Activated B cell treated with CpG ODN at 0.5 μM for 24 hours (primary cell): ENCODE measurements at regions of chr4 and their contacts with region 1.

Region 1: DNA sequence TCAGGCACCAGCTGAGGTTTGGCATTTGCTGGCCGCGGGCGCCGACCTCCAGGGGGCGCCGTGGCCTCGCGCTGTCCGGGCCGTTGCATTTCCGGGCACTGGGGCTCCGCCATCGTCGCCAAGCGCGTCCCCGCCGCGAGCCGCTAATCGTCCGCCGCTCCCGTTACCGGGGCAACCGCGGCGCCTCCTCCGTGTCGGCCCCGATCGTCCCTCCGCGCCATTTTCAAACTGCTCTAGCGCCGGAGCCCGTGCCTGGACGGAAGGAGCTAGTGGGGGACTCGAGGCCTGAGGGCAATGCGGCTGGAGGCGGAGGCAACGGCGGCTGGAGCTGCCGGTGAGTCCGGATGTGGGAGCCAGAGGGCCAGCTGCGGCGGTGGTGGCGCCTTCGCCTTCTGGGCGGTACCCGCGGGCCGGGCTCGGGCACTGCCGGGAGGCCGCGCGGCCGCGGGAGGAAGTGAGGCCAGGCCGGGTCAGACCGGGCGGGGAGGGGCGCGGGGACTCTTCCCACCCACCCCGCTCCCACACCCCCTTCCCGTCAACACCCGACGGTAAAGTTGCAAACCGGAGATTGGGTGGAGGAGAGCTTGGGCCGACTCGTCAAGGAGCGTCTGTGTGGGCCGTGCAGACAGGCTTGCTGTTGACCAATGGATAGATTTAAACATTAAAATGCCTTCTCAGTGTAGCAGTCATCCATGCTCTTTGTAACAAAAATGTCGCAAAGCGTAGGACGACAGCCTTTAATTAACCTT is at the start of gene CEP135:
- DNase-seq: peak; percentile 94
- ATAC-seq: peak; percentile 79
- H3K4me3 Mint-ChIP-seq: peak within 1 kb of the TSS; percentile 94
- H3K27ac Mint-ChIP-seq: peak within 1 kb of the TSS; percentile 99
- H3K4me1 Mint-ChIP-seq: peaks cover 58% of the 10 kb centered on the region
- H3K27me3 Mint-ChIP-seq: no peaks in the 10 kb centered on the region
- CTCF ChIP-seq: peak; percentile 63
- total RNA-seq, gene CEP135: 24.7 and 30.2 TPM in 2 replicates

Region 2: DNA sequence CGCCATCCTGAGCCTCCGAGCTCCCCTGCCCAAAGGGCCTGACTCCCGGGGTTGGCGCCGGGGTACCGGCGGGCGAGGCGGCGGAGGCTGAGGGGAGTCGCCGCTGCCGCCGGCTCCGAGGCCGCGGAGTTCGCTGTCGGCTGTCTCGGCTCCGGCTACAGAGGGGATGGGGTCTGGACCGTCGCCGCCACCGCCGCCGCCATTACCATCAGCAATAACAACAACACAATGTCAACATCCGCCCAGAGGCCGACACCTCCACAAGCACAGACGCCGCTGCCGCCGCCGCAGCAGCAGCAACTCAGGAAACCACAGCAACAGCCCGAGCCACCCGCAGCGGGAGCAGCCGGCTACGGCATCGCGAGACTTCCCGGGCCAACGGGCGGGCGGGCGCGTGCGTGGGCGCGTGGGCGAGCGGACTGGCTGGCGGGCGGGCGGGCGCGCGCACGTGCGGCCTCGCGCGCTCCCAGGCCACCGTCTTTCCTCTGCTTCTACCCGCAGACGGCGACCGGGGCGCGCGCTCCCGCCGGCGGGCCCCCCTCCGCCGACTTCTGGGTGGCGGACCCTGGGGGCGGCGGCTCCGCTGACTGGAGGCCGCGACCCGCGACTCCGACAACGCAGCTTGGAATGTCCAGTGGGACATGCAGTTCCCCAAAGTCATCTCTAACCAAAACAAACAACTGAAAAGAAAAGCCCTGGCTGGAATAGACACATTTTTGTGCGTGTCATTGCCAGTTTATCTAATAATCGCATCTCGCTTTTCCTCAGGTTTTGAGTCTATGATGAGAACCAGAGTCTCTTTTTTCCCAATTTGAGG is 1884.4 kb before region 1 on chr4 and contains the start of gene CHIC2:
- CTCF ChIA-PET with region 1: no interaction called
- POLR2A ChIA-PET with region 1: no interaction called
- intact Hi-C with region 1: loop called (anchors 5 kb)
- DNase-seq: peak; percentile 95
- ATAC-seq: peak; percentile 90
- H3K4me3 Mint-ChIP-seq: peak within 1 kb of the TSS; percentile 92
- H3K27ac Mint-ChIP-seq: peak within 1 kb of the TSS; percentile 87
- H3K4me1 Mint-ChIP-seq: peaks cover 47% of the 10 kb centered on the region
- H3K27me3 Mint-ChIP-seq: peaks cover 3% of the 10 kb centered on the region
- CTCF ChIP-seq: no peak
- total RNA-seq, gene CHIC2: 17.5 and 21.6 TPM in 2 replicates

Region 3: DNA sequence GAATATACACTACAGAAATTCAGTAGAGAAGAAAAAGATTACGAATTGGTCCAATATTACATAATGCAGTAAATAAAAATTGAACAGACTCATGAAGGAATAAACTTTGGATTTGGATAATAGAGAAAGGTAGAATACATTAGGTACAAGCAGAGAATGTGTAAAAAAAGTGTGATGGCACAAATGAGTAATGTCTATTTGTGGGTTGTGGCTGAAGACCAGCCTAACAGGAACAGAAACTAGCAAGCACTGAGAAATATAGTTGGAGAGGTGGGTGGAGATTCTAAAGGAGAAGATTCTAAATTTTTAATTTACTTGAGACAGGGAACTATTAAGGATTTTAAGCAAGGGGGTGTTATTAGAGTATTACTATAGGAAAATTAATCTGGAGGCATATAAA is 387.0 kb before region 1 on chr4:
- CTCF ChIA-PET with region 1: no interaction called
- POLR2A ChIA-PET with region 1: no interaction called
- intact Hi-C with region 1: loop called (anchors 5 kb)
- DNase-seq: no peak
- ATAC-seq: peak; percentile 98
- H3K4me3 Mint-ChIP-seq: peak overlapping the region; percentile 9
- H3K27ac Mint-ChIP-seq: peak overlapping the region; percentile 30
- H3K4me1 Mint-ChIP-seq: peaks cover 20% of the 10 kb centered on the region
- H3K27me3 Mint-ChIP-seq: no peaks in the 10 kb centered on the region
- CTCF ChIP-seq: no peak

Region 4: DNA sequence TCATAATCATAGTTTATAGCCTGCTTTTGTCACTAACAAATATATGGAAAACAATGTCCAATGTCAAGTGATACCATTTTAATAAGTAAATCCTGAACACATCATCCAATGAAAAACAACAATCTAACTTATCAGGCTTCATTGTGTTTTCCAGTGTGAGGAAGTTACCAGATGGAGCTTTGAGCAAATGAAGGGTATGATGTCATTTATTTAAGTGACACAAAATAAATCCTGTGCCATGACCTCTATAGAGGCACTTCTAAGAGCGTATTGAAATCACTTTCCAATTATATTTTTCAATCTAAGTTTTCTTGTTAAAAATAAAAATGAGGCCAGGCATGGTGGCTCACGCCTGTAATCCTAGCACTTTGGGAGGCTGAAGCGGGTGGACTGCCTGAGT is 264.6 kb before region 1 on chr4:
- CTCF ChIA-PET with region 1: no interaction called
- POLR2A ChIA-PET with region 1: no interaction called
- intact Hi-C with region 1: no loop called
- DNase-seq: no peak
- ATAC-seq: no peak
- H3K4me3 Mint-ChIP-seq: no peak overlapping the region
- H3K27ac Mint-ChIP-seq: no peak overlapping the region
- H3K4me1 Mint-ChIP-seq: no peaks in the 10 kb centered on the region
- H3K27me3 Mint-ChIP-seq: no peaks in the 10 kb centered on the region
- CTCF ChIP-seq: no peak

Region 5: DNA sequence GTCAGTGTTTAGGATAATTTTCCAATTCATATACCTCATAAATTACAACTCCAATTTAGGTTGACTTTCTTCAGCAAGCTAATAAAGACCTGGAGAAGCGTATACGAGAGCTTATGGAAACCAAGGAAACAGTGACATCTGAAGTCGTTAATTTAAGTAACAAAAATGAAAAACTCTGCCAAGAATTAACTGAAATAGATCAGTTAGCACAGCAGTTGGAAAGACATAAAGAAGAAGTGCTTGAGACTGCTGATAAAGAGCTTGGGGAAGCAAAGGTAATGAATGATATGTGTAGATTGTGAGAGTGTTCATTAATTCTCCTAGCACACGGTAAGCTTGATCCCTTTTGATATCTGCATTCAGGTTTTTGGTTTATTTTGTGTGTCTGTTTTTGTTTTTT is 16.7 kb after region 1 on chr4:
- CTCF ChIA-PET with region 1: no interaction called
- POLR2A ChIA-PET with region 1: interaction called, 8 read pairs
- intact Hi-C with region 1: loop called (anchors 2 kb)
- DNase-seq: no peak
- ATAC-seq: no peak
- H3K4me3 Mint-ChIP-seq: no peak overlapping the region
- H3K27ac Mint-ChIP-seq: no peak overlapping the region
- H3K4me1 Mint-ChIP-seq: peaks cover 2% of the 10 kb centered on the region
- H3K27me3 Mint-ChIP-seq: no peaks in the 10 kb centered on the region
- CTCF ChIP-seq: no peak

Region 6: GRCh38 chr4:56301181-56302076 is 352.5 kb after region 1 on chr4:
- CTCF ChIA-PET with region 1: interaction called, 24 read pairs
- POLR2A ChIA-PET with region 1: no interaction called
- intact Hi-C with region 1: loop called (anchors 1 kb)
- DNase-seq: no peak
- ATAC-seq: peak; percentile 68
- H3K4me3 Mint-ChIP-seq: no peak overlapping the region
- H3K27ac Mint-ChIP-seq: no peak overlapping the region
- H3K4me1 Mint-ChIP-seq: peaks cover 6% of the 10 kb centered on the region
- H3K27me3 Mint-ChIP-seq: no peaks in the 10 kb centered on the region
- CTCF ChIP-seq: no peak

Region 7: DNA sequence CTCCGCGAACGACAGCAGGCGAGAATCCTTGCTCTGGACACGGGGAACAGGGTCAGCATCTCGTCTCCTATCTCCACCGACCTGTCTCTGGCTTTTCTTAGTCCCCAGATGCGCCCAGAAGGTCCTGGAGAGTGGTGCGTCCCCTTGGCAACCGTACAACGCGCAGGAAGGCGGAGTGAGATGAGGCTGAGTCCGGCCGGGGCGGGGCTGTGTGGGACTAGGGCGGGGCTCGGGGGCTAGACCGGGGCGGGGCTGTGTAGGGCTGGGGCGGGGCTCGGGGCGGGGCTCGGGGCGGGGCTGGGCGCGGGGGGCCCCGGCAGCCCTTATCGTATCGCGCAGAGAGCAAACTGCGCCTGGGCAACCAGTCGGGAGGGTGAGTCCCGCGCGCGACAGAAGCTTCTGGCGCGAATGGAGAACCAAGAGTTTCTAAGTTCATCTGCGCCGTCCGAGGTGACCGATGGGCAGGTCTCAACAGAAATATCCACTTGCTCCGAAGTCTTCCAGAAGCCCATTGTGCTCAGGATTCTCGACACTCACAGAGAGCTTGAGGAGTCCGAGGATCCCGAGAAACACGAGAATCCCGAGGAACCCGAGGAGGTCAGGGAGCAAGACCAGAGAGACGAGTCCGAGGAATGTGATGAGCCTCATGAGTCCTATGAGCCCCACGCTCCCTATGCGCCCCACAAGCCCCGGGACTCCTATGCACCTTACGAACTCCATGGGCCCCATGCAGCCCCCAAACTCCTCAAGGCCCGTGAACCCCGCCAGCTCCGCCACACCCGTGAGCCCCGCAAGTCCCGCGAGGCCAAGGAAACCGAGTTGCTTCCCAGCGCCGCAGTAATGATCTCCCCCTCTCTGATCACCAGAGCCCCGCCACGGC is 581.6 kb after region 1 on chr4:
- CTCF ChIA-PET with region 1: no interaction called
- POLR2A ChIA-PET with region 1: no interaction called
- intact Hi-C with region 1: loop called (anchors 5 kb)
- DNase-seq: peak; percentile 72
- ATAC-seq: peak; percentile 99
- H3K4me3 Mint-ChIP-seq: peak overlapping the region; percentile 68
- H3K27ac Mint-ChIP-seq: no peak overlapping the region
- H3K4me1 Mint-ChIP-seq: peaks cover 4% of the 10 kb centered on the region
- H3K27me3 Mint-ChIP-seq: peaks cover 12% of the 10 kb centered on the region
- CTCF ChIP-seq: no peak